ENCODE measurements at regions of chr14 and their contacts with region 1.

Region 1: DNA sequence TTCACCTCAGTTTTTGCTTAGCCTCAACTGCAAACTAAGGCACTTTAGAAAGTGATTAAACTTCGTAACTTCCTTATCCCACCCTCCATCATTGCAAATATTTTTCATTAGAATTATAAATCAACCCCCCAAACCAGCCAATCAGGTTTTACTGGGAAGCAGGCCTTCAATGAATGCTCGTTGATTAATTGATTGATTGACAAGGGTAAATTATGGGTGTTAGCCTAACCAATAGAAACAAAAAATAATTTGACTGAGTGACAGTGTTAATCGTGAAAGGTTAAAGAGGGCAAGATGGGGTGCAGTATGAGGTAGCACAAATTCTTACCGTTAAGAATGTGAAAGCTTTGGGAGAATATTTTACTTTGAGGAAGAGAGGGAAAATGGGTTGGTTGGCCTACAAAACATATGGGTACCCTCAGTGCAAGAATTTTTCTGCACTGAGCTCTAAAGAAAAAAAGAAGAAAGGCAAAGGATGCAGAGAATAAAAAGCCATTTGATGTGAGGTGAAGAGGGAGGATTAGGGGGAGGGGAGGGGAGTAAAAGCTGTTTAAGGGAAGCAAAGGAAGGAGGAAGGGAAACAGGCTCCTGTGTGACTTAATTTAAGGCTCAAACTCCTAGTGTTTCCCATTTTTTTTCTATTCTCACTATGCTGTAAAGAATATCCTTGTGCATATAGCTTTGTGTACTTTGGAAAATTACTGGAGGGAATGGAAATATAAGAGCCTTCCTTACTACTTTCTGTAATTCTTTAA is 78.9 kb downstream of the NKX2-1 start:
- DNase-seq: no peak
- H3K4me3 ChIP-seq: no peak overlapping the region
- H3K27ac ChIP-seq: no peak overlapping the region
- H3K4me1 ChIP-seq: no peaks in the 10 kb centered on the region
- H3K27me3 ChIP-seq: peaks cover 10% of the 10 kb centered on the region
- CTCF ChIP-seq: no peak

Region 2: DNA sequence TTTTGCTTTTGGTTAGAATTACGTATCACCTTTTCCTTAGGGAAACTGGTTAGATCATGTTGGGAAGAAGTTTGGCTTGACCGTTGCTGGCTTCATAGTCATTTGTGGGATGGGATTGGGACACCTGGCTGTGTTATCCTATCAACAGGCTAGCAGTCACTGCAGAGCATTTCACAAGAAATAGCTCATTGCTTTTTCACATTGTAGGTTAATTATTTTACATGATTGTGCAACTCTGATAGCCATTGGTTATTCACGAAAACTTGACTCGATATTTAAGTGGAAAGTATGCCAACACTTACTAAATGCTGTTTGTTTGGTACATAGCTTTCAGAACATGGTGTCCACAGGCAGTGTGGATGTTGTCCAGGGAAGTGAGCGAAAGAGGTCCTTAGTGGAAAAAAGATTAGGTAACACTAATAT is 10.4 kb before region 1 on chr14:
- CTCF ChIA-PET with region 1: interaction called, 12 read pairs
- dilution Hi-C with region 1: no loop called
- in situ Hi-C with region 1: no loop called
- intact Hi-C with region 1: no loop called
- DNase-seq: no peak
- H3K4me3 ChIP-seq: no peak overlapping the region
- H3K27ac ChIP-seq: no peak overlapping the region
- H3K4me1 ChIP-seq: no peaks in the 10 kb centered on the region
- H3K27me3 ChIP-seq: no peaks in the 10 kb centered on the region
- CTCF ChIP-seq: no peak

Region 3: GRCh38 chr14:36818794-36819384 is 377.8 kb after region 1 on chr14:
- CTCF ChIA-PET with region 1: no interaction called
- dilution Hi-C with region 1: no loop called
- in situ Hi-C with region 1: no loop called
- intact Hi-C with region 1: no loop called
- DNase-seq: peak; percentile 21
- H3K4me3 ChIP-seq: no peak overlapping the region
- H3K27ac ChIP-seq: no peak overlapping the region
- H3K4me1 ChIP-seq: peaks cover 22% of the 10 kb centered on the region
- H3K27me3 ChIP-seq: no peaks in the 10 kb centered on the region
- CTCF ChIP-seq: no peak

Measured in mammary epithelial cell (primary cell).